Activated CD8-positive, alpha-beta T cell treated with anti-CD3 and anti-CD28 coated beads, Interleukin-2, amount 10 ng/mL, durations not matched to agents 7 days and 5 days (primary cell): ENCODE measurements at regions of chr17 and their contacts with region 1.

Region 1: DNA sequence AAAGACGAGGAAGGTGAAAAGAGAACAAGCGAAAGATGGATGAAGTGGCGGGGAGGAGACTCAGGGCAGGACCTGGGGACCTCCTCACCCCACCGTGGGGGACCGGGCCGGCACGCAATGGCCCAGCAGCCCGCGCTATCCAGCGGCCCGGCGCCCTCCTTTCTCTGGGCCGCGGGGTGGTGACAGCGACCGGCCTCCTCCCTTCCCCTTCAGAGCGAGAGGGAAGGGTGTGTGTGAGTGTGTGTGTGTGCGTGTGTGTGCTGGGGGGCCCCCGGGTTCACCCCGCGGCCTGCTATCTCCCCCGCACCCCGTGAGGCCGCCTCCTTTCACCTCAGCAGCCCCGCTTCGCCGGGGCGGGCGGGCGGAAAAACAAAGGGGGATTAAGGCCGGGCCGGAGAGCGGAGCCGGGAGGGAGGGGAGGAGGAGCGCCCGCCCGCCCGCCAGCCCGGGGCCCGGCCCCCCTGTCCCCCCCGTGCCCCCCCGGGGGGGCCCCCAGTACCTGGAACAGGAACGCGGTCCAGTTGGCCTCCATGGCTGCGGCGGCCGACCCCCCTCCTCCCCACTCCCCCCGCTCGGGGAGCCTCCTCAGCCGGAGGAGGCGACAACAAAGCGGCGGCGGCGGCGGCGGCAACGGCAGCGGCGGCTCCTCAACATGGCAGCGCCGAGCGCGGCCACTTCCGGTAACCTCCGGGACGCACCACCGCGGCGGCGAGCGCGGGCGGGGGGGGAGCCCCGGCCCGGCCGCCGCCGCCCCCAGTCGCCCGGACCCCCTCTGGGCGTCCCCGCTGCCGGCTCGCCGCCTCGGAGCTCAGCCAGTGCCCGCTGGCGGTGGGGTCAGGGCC is at the start of gene VEZF1:
- DNase-seq: peak; percentile 82
- ATAC-seq: peak; percentile 73
- H3K4me3 Mint-ChIP-seq: peak within 1 kb of the TSS; percentile 91
- H3K27ac Mint-ChIP-seq: peak within 1 kb of the TSS; percentile 92
- H3K4me1 Mint-ChIP-seq: peaks cover 66% of the 10 kb centered on the region
- H3K27me3 Mint-ChIP-seq: no peaks in the 10 kb centered on the region
- total RNA-seq, gene VEZF1: 37.5 to 37.6 TPM

Region 2: GRCh38 chr17:57946798-57947358 is 40.9 kb before region 1 on chr17:
- CTCF ChIA-PET with region 1: no interaction called
- POLR2A ChIA-PET with region 1: no interaction called
- DNase-seq: peak; percentile 60
- ATAC-seq: peak; percentile 91
- H3K4me3 Mint-ChIP-seq: peak overlapping the region; percentile 52
- H3K27ac Mint-ChIP-seq: no peak overlapping the region
- H3K4me1 Mint-ChIP-seq: peaks cover 40% of the 10 kb centered on the region
- H3K27me3 Mint-ChIP-seq: peaks cover 47% of the 10 kb centered on the region

Region 3: DNA sequence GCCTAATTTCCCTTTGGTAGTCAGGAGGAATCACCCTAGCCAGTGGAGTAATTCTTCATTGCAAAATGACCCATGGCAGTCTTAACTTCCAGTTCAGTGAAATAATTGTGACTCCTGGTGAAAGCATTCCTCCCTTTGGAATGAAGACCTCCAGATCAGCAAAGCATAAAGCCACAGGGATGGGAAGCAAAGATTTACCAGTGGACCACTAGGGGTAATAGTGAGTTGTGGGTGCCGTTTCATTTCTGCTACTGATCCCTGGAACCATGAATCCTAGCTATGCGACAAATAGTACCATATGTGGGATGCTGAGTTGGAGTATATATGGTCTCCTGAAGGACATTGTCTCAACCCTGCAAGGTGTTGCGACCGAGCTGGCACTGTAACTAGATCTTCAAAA is 109.1 kb after region 1 on chr17:
- CTCF ChIA-PET with region 1: no interaction called
- POLR2A ChIA-PET with region 1: no interaction called
- DNase-seq: no peak
- ATAC-seq: no peak
- H3K4me3 Mint-ChIP-seq: no peak overlapping the region
- H3K27ac Mint-ChIP-seq: no peak overlapping the region
- H3K4me1 Mint-ChIP-seq: peaks cover 8% of the 10 kb centered on the region
- H3K27me3 Mint-ChIP-seq: peaks cover 2% of the 10 kb centered on the region

Region 4: DNA sequence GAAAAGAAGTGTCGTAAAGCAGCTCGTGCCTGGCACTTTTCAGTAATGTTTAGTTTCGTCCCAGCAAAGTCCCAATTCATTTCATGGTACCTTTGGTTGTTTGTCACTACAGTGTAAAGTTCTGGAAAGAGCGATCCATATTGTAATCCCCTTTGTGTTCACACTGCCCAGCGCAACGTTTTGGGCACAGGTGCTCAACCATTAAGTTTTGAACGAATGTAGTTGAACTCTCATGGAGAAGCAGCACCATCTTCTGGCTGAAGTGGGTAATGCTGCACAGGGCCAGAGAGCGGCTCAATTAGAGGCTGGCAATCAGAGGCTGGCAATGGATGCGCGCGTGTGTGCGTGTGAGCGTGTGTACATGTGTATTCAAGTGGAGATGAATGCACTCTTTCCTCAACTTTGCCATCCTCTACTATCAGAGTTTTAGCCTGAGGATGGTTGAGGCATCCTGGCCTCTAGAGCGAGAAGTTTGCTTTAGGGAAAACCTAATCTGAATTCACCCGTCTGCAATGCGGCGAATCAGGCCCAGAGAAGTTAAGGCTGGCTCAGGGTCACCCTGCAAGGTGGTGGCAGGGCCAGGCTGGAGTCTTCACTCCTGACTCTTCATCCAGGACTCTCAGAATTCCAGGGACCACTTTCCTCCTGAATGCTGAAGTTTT is 125.3 kb after region 1 on chr17:
- CTCF ChIA-PET with region 1: interaction called, 10 read pairs
- POLR2A ChIA-PET with region 1: no interaction called
- DNase-seq: peak; percentile 90
- ATAC-seq: peak; percentile 88
- H3K4me3 Mint-ChIP-seq: no peak overlapping the region
- H3K27ac Mint-ChIP-seq: no peak overlapping the region
- H3K4me1 Mint-ChIP-seq: no peaks in the 10 kb centered on the region
- H3K27me3 Mint-ChIP-seq: peaks cover 7% of the 10 kb centered on the region